A673 (cell line): ENCODE measurements at regions of chrX and their contacts with region 1.

Region 1: DNA sequence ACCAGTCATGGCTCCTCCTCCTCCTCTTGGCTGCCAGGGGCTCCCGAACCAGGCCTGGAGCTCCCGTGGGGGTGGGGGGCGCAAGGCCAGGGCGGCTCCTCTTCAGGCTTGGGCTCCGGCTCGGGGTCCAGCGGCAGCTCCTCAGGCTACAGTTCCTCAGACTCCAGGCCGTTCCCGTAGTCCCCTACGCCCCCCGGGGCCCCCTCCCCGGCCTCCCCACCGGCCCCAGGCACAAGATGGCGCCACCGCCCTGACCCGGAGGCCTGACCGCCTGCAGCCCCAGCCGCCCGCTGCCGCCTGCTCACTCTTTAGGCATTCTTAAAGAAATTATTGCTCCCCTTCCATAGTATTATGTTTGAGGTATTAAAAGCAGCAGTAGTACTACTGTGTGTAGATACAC is 54.5 kb downstream of the TAF1 start:
- DNase-seq: no peak
- H3K4me3 ChIP-seq: no peak overlapping the region
- H3K27ac ChIP-seq: no peak overlapping the region
- H3K4me1 ChIP-seq: no peaks in the 10 kb centered on the region
- H3K27me3 ChIP-seq: no peaks in the 10 kb centered on the region
- CTCF ChIP-seq: no peak

Region 2: GRCh38 chrX:71652405-71652804 is 231.7 kb after region 1 on chrX:
- CTCF ChIA-PET with region 1: no interaction called
- POLR2A ChIA-PET with region 1: no interaction called
- intact Hi-C with region 1: loop called (anchors 5 kb)
- DNase-seq: peak; percentile 65
- H3K4me3 ChIP-seq: no peak overlapping the region
- H3K27ac ChIP-seq: no peak overlapping the region
- H3K4me1 ChIP-seq: no peaks in the 10 kb centered on the region
- H3K27me3 ChIP-seq: no peaks in the 10 kb centered on the region
- CTCF ChIP-seq: peak; percentile 72